CD14-positive monocyte (primary cell): ENCODE measurements at regions of chr2 and their contacts with region 1.

Region 1: GRCh38 chr2:169584005-169584877 is at the start of gene PPIG:
- DNase-seq: peak; percentile 89 to 93 (median 91)
- H3K4me3 ChIP-seq: peak within 1 kb of the TSS; percentile 59 to 100 (median 92)
- H3K4me3 Mint-ChIP-seq: peak within 1 kb of the TSS; percentile 98 to 99
- H3K27ac ChIP-seq: peak within 1 kb of the TSS; percentile 96
- H3K27ac Mint-ChIP-seq: peak within 1 kb of the TSS; percentile 99 to 100 (median 100)
- H3K4me1 ChIP-seq: peaks cover 19 to 23% of the 10 kb centered on the region in 2 donors
- H3K4me1 Mint-ChIP-seq: peaks cover 28% of the 10 kb centered on the region
- H3K27me3 ChIP-seq: no peaks in the 10 kb centered on the region
- H3K27me3 Mint-ChIP-seq: peaks cover 0 to 2% (median 0%) of the 10 kb centered on the region in 3 donors
- CTCF ChIP-seq: no peak
- polyA plus RNA-seq, gene PPIG: 21.0 to 34.4 (median 21.3) TPM

Region 2: DNA sequence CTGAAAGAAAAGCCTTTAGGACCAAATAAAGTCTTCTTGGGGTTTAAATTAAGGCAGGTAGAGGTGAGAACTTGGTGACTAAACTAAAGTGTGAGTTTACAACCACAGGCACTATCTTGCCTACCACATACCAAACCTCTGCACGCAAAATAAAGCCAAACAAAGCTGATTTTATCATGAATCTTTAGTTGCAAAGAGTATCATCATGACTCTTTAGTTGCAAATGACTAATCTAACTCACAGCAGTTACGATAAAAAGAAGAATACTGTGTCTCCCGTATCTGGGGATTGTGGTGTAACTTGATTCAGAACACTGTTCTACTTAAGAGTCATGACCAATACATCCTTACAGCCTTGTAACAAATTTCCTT is 98.8 kb after region 1 on chr2:
- intact Hi-C with region 1: no loop called
- DNase-seq: no peak
- H3K4me3 ChIP-seq: no peak overlapping the region
- H3K4me3 Mint-ChIP-seq: no peak overlapping the region
- H3K27ac ChIP-seq: no peak overlapping the region
- H3K27ac Mint-ChIP-seq: no peak overlapping the region
- H3K4me1 ChIP-seq: no peaks in the 10 kb centered on the region
- H3K4me1 Mint-ChIP-seq: no peaks in the 10 kb centered on the region
- H3K27me3 ChIP-seq: no peaks in the 10 kb centered on the region
- H3K27me3 Mint-ChIP-seq: peaks cover 0 to 2% (median 0%) of the 10 kb centered on the region in 3 donors
- CTCF ChIP-seq: no peak

Region 3: DNA sequence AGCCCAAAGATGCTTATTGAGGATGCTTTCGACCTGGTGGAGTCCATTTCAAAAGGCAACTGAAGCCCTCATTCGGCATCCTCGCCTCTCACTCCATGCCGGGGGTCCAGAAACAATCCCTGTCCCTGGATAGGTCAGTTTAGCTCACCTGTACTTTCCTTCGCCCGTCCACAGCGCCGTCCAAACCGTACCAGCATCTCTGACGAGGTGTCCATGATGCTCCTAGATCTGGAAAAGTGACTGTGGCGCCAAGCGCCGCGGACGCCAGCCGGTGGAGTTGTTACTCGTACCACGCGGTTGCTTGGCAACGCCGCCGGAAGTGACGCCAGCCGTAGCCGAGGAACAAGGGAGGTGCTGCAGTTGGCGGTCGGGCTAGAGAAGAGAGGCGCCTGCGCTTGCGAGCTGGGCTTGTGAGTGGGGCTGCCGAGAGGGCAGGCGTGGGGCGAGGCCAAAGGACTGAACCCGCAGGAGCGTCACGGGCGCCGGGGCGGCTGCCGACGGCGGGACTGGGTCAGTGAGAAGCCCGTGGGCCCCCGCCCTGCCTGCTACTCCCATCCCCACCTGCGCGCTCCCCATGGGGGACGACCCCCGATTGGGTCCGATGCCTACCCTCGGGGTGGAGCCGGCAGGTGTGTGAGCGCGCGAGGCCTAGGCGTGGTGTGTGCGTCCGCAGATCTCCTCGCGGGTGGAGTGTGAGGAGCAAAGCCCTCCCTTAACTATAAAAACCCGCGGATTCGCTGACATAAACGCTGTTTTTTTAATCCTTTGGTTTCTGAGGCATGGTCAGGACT is 110.1 kb after region 1 on chr2 and contains the starts of genes CFAP210 and PHOSPHO2:
- intact Hi-C with region 1: loop called (anchors 10 kb)
- DNase-seq: peak; percentile 98
- H3K4me3 ChIP-seq: peak within 1 kb of the TSS; percentile 47 to 85 (median 83)
- H3K4me3 Mint-ChIP-seq: peak within 1 kb of the TSS; percentile 90 to 98
- H3K27ac ChIP-seq: peak within 1 kb of the TSS; percentile 65 to 88
- H3K27ac Mint-ChIP-seq: peak within 1 kb of the TSS; percentile 85 to 99 (median 96)
- H3K4me1 ChIP-seq: peaks cover 14 to 16% of the 10 kb centered on the region in 2 donors
- H3K4me1 Mint-ChIP-seq: peaks cover 11% of the 10 kb centered on the region
- H3K27me3 ChIP-seq: peaks cover 0 to 2% of the 10 kb centered on the region in 2 donors
- H3K27me3 Mint-ChIP-seq: peaks cover 7 to 11% (median 7%) of the 10 kb centered on the region in 3 donors
- CTCF ChIP-seq: no peak
- polyA plus RNA-seq, gene CFAP210: not detected
- polyA plus RNA-seq, gene PHOSPHO2: 0.53 to 1.2 (median 0.74) TPM